ENCODE measurements at regions of chr16 and their contacts with region 1.

Region 1: DNA sequence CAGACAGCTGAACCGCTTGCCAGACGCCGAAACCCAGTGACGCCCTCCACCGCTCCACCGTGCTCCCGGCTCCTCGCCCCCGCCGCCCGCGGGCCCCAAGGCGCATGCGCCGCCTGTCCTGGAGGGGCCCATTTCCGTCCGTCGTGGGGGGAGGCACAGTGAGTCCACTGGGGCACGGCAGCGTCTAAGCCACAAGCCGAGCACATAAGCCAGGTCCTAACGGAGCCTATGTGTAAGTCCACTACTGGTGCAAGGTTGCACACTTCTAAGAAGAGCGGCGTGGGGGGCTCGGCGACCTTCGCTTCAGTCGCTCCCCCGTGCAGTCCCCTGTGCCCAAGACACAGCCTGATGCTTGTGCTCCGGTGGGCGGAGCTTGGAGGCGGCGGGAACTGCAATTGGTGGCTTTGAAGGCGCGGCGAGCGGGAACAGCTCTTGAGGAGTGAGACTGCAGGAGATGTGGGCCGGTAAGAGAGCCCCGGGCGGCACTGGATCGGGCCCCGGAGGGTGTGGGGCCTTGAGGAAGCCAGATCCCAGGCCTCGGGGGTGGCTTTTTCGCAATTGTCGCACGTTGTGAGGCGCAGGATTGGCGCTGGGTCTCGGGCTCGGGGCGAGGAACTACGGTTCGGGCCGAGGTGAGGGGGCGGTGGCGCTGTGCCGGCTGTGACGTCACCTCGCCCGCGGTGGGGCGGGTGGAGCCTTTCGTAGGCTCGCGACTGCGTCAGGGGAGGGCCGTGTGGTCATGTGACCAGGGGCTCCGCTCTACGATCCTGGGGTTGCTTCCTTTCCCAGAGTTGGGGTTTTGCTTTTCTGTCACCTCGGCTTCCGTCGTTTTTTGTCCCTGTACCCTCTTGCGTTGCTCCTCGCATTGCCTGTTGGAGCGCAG is at the starts of genes CENPN and CMC2:
- DNase-seq: peak; percentile 99
- H3K4me3 ChIP-seq: peak within 1 kb of the TSS; percentile 80 to 89
- H3K27ac ChIP-seq: peak within 1 kb of the TSS; percentile 98
- H3K4me1 ChIP-seq: peaks cover 3 to 17% of the 10 kb centered on the region in 2 donors
- H3K27me3 ChIP-seq: no peaks in the 10 kb centered on the region
- CTCF ChIP-seq: peak in 1 of 3 experiments; percentile 10
- total RNA-seq, gene CENPN: not detected
- total RNA-seq, gene CMC2: 4.0 TPM

Region 2: DNA sequence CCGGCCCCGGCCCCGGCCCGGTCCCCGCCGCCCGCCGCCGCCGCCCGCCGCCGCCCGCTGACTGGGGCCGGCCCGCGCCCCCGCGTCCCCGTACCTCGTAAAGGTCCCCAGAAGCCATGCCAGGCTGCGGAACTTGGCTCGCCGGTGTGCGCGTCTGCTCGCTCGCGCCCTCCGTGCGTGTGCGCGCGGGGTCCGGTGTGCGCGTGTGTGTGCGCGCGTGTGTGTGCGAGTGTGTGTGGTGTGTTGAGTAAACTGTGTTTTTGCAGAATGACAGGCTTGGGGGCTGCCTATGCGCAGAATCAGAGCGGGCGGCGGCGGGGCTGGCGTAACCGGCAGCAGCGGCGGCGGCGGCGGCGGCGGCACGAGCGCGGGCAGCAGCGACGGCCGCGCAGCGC is 203.0 kb before region 1 on chr16:
- intact Hi-C with region 1: loop called (anchors 10 kb)
- DNase-seq: peak in 1 of 2 donors; percentile 66
- H3K4me3 ChIP-seq: peak overlapping the region; percentile 70 to 77
- H3K27ac ChIP-seq: no peak overlapping the region
- H3K4me1 ChIP-seq: no peaks in the 10 kb centered on the region
- H3K27me3 ChIP-seq: no peaks in the 10 kb centered on the region
- CTCF ChIP-seq: no peak

Region 3: DNA sequence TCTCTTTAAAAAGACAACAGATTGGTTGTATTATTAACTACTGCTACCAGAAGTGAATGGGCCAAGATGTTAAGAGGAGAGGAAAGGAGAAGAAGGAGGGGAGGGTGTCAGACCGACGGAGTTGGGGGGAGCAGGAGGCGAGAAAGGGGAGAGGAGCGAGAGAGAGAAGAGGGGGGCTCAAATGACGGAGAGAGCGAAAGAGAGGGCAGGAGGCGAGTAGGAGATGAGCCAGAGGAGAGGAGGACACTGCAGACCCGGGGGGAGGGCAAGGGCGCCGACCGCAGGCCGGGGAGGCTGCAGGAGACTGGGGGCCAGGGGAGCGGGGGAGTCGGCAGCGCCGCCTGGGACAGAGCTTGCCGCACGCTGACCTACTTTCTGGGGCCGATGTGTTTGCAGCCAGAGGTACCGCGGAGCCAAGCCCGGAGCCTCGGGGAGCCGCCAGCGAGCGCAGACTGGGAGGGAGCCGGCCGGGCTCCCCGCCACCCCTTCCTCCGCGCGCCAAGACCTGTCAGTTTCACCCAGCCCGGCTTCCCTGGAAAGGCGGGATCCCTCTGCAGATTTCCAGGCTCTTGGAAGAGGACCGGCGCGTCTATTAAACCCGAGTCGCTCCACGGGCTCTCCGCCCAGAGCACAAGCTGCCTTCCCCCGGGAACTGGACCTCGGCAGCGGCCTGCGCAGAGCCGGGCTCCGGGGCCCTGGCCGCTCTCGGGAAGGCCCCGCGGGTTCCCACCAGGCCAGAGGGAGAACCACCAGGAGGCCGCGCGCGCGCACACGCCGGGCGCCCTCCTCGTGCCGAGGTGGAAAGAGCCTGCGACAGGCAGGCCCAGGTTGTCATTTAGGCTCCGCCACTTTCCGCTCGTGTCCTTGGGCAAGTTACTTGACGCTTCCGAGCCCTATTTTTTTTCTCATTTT is 75.0 kb before region 1 on chr16:
- intact Hi-C with region 1: loop called (anchors 2 kb)
- DNase-seq: peak in 1 of 2 donors; percentile 69
- H3K4me3 ChIP-seq: peak overlapping the region; percentile 63 to 67
- H3K27ac ChIP-seq: peak overlapping the region; percentile 89 to 94
- H3K4me1 ChIP-seq: peaks cover under 1 to 2% of the 10 kb centered on the region in 2 donors
- H3K27me3 ChIP-seq: no peaks in the 10 kb centered on the region
- CTCF ChIP-seq: peak in 1 of 3 experiments; percentile 4

Region 4: DNA sequence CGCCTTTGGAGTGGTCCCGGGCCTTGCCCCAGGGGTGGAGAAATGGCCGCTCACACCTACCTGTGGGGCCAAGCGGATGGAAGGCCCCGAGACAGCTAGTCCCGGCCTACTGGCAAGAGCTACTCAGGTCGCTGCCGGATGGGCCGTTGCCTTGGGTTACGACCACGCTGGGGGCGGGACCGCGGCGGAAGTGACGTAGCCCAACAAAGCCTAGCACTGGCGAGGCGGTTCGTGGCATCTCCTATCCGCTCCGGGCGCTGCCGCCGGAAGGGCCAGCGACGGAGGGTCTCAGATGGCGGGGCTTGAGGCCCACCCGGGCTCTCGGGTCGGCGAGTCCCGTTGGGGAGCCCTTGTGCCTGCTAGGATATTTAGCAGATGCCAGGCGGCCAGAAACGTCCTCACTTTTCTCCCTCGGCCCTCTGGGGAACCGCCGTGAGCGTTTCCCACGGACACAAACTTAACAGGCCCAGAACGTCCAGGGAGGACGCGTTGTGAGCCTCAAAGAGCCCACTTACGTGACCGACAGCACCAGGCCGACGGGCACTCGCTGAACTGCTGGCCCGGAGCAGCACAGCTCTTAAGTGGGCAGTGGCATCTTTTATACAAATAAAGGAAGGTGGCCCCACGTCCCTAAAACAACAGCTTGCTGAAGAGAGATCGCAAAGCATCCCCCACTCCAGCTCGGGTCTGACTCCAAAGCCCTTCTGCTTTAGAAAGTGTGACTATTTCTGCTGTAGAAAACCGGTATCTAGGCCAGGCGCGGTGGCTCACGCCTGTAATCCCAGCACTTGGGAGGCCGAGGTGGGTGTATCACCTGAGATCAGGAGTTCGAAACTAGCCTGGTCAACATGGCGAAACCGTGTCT is 70.3 kb after region 1 on chr16 and contains the start of gene C16orf46:
- intact Hi-C with region 1: loop called (anchors 1 kb)
- DNase-seq: peak; percentile 93 to 99
- H3K4me3 ChIP-seq: peak within 1 kb of the TSS; percentile 72 to 91
- H3K27ac ChIP-seq: peak within 1 kb of the TSS; percentile 96 to 99
- H3K4me1 ChIP-seq: peaks cover 0 to 4% of the 10 kb centered on the region in 2 donors
- H3K27me3 ChIP-seq: no peaks in the 10 kb centered on the region
- CTCF ChIP-seq: no peak
- total RNA-seq, gene C16orf46: not detected

Region 5: GRCh38 chr16:81314603-81315270 is 307.7 kb after region 1 on chr16 and contains the start of gene GAN:
- intact Hi-C with region 1: loop called (anchors 10 kb)
- DNase-seq: peak; percentile 88 to 96
- H3K4me3 ChIP-seq: peak within 1 kb of the TSS; percentile 88 to 95
- H3K27ac ChIP-seq: peak within 1 kb of the TSS; percentile 88 to 91
- H3K4me1 ChIP-seq: peaks cover 0 to 16% of the 10 kb centered on the region in 2 donors
- H3K27me3 ChIP-seq: no peaks in the 10 kb centered on the region
- CTCF ChIP-seq: no peak
- total RNA-seq, gene GAN: 2.6 TPM

Region 6: DNA sequence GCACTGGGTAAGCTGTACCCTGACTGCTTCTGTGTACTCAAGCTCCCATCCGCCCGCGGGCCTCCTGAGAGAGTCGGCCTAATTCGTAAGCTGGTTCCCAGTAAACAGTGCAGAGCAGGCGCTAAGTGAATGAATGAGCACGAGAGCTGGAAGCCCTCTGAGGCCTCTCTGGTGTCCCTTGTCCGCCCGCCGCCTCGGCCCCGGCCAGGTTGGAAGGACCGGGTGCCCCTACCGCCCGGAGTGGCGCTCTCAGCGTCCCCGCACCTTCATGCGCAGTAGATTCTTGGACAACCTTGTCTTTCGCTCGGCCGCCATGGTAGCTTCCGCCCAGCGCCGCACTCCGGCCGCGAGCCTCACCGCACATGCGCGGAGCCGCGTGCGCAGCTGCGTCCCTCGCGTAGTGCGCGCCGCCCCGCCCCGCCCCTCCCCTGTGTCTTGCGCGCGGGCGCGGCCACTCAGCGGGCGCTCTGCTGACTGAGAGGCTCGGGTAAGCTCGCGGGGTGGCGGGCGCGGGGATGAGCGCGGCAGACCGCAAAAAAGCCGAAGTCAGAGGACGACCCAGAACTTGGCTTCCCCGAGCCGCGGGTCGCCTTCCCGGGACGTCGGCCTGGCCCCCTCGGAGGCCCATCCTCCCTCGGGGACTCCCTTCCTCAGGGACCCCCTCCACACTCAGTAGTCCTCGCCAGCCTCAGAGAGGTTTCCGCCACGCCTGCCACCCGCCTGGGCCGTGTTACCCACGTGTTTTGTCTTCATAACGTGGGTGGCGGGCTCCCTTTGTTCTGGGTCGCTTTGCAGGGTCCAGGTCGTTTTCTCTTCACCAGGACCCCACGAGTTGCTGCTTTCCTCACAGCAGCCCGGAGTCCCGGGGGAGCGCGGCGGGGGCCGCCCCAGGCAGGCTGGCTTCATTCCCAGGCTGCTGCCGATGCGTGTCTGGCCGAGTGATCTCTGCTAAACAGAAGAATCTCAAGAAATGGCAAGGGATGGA is 1163.1 kb after region 1 on chr16 and contains the start of gene MPHOSPH6:
- intact Hi-C with region 1: loop called (anchors 10 kb)
- DNase-seq: peak; percentile 34 to 95
- H3K4me3 ChIP-seq: peak within 1 kb of the TSS; percentile 55 to 70
- H3K27ac ChIP-seq: peak within 1 kb of the TSS; percentile 64 to 69
- H3K4me1 ChIP-seq: no peaks in the 10 kb centered on the region
- H3K27me3 ChIP-seq: no peaks in the 10 kb centered on the region
- CTCF ChIP-seq: no peak
- total RNA-seq, gene MPHOSPH6: 86.5 TPM

Measured in ascending aorta (tissue), 2 donors.